Activated CD4-positive, alpha-beta T cell treated with anti-CD3 and anti-CD28 coated beads for 36 hours (primary cell): ENCODE measurements at regions of chr17 and their contacts with region 1.

Region 1: GRCh38 chr17:35879773-35880654 is at the start of gene CCL5:
- DNase-seq: peak; percentile 59
- ATAC-seq: peak; percentile 94
- H3K4me3 Mint-ChIP-seq: peak within 1 kb of the TSS; percentile 51
- H3K27ac Mint-ChIP-seq: peak within 1 kb of the TSS; percentile 93
- H3K4me1 Mint-ChIP-seq: peaks cover 29% of the 10 kb centered on the region
- H3K27me3 Mint-ChIP-seq: no peaks in the 10 kb centered on the region
- total RNA-seq, gene CCL5: 33.1 to 50.4 TPM

Region 2: DNA sequence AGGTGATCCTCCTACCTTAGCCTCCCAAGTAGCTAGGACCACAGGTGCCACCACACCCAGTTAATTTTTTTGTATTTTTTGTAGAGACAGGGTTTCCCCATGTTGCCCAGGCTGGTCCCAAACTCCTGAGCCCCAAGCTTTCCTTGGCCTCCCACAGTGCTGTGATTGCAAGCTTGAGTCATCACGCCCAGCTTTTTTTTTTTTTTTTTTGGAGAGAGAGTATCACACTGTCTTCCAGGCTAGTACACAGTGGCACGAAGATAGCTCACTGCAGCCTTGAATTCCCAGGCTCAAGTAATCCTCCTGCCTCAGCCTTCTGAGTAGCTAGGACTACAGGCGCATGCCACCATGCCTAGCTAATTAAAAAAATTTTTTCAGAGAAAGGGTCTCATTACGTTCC is 38.5 kb before region 1 on chr17:
- CTCF ChIA-PET with region 1: interaction called, 5 read pairs
- POLR2A ChIA-PET with region 1: interaction called, 13 read pairs
- intact Hi-C with region 1: no loop called
- DNase-seq: no peak
- ATAC-seq: peak; percentile 42
- H3K4me3 Mint-ChIP-seq: no peak overlapping the region
- H3K27ac Mint-ChIP-seq: no peak overlapping the region
- H3K4me1 Mint-ChIP-seq: peaks cover 5% of the 10 kb centered on the region
- H3K27me3 Mint-ChIP-seq: no peaks in the 10 kb centered on the region

Region 3: DNA sequence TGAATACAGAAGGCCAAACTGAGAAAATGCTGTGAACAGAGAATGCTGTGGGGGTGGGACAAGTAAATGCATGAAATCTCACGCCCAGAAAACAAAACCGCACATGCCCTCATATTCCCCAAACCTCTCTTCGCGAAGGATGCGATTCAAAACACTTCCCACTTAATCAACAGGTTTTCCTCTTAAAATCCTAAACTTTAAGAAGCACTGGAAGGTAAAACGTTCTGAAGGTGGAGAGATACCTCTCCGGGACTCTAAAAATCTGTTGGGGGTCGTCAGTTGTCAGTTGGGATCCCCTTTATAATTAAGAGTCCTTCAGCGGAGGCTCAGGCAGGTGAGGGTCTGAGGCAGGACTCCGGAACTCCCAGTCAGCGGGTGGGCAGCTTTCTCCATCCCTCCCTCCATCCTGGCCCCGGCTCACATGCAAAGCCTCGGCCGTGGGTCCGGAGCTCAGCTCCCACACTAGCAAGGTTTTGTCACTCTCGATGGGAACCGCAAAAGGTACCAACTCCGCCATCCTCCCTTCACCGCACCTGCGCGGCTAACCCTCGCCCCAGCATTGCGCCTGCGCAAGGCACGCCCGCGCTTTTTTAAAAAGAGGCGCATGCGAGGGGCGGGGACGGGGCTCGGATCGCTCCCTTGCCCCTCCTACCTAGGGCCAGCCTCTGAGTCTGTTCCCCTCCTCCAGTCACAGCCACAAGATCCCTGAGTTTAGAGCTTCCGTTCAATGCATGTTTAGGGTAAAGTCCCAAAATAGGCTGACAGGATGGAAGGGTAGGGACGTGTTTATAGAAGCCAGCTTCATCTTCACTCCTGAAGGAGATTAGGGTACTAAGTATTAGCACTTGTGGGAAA is 50.4 kb after region 1 on chr17 and contains the start of gene RDM1:
- CTCF ChIA-PET with region 1: no interaction called
- POLR2A ChIA-PET with region 1: no interaction called
- intact Hi-C with region 1: loop called in 1 of 2 experiments (anchors 1 kb)
- DNase-seq: peak; percentile 95
- ATAC-seq: peak; percentile 100
- H3K4me3 Mint-ChIP-seq: peak within 1 kb of the TSS; percentile 80
- H3K27ac Mint-ChIP-seq: peak within 1 kb of the TSS; percentile 62
- H3K4me1 Mint-ChIP-seq: peaks cover 22% of the 10 kb centered on the region
- H3K27me3 Mint-ChIP-seq: no peaks in the 10 kb centered on the region
- total RNA-seq, gene RDM1: 4.4 to 6.5 TPM

Region 4: DNA sequence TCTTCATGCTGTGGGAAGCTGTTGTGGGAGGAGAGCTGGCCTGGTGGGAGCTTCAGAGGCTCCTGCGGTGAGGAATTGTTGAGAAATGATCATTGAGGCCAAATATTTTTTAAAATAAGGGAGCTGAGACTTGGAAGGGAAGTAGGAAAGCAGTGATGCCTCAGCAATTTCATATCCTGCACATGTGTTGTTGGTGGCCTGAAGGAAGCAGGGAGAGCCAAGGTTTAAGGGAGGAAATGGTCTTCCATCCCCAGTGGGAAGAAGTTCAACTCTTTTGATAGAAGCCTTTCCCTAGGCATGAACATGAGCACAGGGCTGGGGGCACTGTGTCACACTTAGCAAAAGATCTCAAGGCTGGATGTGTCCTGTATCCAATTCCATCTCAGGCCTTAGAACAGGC is 106.6 kb after region 1 on chr17 and contains the start of gene CCL14:
- CTCF ChIA-PET with region 1: no interaction called
- POLR2A ChIA-PET with region 1: no interaction called
- intact Hi-C with region 1: no loop called
- DNase-seq: no peak
- ATAC-seq: no peak
- H3K4me3 Mint-ChIP-seq: no peak within 1 kb of the TSS
- H3K27ac Mint-ChIP-seq: no peak within 1 kb of the TSS
- H3K4me1 Mint-ChIP-seq: no peaks in the 10 kb centered on the region
- H3K27me3 Mint-ChIP-seq: no peaks in the 10 kb centered on the region
- total RNA-seq, gene CCL14: not detected

Region 5: GRCh38 chr17:36089888-36090836 is 210.1 kb after region 1 on chr17 and contains the start of gene CCL3:
- CTCF ChIA-PET with region 1: no interaction called
- POLR2A ChIA-PET with region 1: interaction called, 4 read pairs
- intact Hi-C with region 1: loop called in 1 of 2 experiments (anchors 5 kb)
- DNase-seq: peak; percentile 67
- ATAC-seq: peak; percentile 75
- H3K4me3 Mint-ChIP-seq: peak within 1 kb of the TSS; percentile 50
- H3K27ac Mint-ChIP-seq: peak within 1 kb of the TSS; percentile 62
- H3K4me1 Mint-ChIP-seq: peaks cover 45% of the 10 kb centered on the region
- H3K27me3 Mint-ChIP-seq: peaks cover 22% of the 10 kb centered on the region
- total RNA-seq, gene CCL3: 287 to 296 TPM